ENCODE measurements at regions of chr2 and their contacts with region 1.

Region 1: DNA sequence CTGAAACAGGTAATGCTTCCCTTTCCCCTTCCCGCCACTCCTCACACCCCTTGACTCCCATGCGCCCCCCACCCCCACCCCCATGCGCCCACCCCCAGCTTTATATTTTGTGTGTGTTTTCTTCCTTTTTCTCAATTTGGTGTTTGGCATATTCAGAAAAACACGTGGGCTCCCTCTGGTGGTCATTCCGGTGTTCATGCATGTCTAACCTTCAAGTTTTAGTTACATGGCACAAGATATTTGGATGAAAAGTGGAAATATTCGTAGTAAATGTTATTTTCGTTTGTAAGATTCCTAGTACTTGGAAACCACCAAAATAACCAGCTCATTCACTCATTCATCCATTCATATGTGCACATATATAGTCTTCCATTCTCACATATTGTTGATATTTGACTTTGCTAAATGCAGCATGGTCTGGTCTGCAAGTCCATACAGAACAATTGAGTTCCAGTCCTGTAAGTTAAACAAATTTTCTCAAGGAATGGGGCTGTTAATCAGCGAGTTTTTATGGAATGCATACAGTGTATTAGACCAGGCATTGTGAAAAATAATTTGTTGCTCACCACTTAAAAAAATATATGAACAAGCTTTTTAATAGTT is 143.6 kb upstream of the MAP3K20 start:
- DNase-seq: no peak
- H3K4me3 ChIP-seq: no peak overlapping the region
- H3K27me3 ChIP-seq: no peaks in the 10 kb centered on the region
- CTCF ChIP-seq: peak; percentile 72

Region 2: DNA sequence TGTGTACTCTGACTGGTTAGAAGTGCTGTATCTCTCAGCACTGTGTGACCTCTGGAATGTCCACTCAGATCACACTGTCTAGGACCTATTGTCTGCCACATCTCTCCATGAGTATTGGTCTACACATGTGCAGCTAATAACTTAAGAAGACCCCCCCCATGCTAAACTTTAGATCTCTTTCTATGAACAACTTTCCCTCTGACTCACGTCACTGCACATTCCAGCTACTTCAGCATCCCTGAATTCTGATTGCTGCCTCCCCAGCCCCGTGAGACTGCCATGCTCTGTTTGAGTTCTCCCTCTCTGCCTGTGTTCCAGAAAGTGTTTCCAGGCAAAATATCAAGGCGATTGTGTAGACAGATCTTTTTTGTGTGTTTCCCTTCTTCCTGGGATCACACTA is 154.6 kb before region 1 on chr2:
- CTCF ChIA-PET with region 1: no interaction called
- POLR2A ChIA-PET with region 1: no interaction called
- DNase-seq: no peak
- H3K4me3 ChIP-seq: no peak overlapping the region
- H3K27me3 ChIP-seq: 0 out of 2 replicates have a peak, but pooled peaks cover 2% of the 10 kb centered on the region
- CTCF ChIP-seq: no peak

Region 3: DNA sequence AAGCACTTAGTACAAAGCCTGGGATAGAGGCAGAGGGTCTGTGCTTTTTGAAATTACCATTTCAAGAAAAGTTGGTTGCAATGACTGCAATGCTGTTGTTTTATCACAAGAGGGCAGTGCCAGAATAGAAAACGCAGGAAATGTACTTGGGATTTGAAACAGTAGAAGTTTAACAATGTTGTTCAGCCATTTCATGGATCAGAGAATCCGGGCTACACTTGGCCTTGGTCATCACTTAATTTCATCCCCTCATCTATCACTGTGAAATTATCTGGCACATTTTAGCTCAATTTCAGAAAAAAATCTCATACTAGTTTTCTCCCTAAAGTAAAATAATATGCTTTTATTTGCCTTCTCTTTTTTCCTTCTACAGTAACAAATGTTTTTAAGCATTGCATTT is 125.5 kb before region 1 on chr2:
- CTCF ChIA-PET with region 1: interaction called, 88 read pairs
- POLR2A ChIA-PET with region 1: no interaction called
- DNase-seq: no peak
- H3K4me3 ChIP-seq: no peak overlapping the region
- H3K27me3 ChIP-seq: peaks cover 2% of the 10 kb centered on the region
- CTCF ChIP-seq: peak; percentile 85

Region 4: DNA sequence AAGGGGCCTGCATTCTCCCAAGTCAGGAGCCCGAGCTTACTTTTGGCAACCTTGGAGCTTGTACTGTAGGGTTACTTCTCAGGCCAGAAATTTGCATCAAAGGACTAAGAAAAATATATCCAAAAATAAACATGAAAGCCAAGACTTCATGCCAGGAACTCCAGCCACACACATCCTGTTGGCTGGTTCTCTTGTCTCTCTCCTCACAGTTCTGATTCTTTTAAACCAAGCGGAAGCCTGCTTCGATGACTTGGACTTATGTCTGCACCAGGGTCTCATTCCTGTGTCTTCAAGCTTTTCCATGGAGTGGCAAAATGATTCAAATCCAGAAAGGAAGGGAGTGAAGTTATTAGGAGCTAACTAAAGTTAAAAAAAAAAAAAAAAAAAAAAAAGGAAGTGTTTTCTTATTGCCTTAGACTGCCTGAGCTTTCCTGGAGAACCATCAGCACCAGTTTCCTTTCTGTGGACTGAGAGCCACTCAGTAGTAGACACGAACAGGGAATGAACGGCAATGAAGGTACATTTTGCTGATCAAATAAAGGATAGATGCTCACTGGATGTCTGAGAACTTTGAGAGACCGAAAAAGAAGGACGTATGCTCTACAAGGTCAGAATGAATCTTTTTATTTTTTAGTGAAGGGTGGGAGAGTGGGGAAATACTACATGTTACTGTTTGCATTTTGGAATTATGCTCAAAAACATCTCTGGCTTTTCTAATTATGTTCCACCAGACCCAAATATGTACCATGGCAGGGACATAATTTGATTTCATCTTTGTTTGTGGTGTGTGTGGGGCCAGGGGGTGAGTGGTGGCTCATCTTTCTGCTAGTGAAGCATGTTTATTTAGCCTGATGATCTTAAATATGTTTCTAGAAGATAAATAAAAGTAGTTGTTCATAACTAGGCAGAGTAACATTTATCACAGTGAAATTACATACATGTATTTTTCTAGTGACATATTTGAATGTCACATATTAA is 110.4 kb before region 1 on chr2:
- CTCF ChIA-PET with region 1: interaction called, 10 read pairs
- POLR2A ChIA-PET with region 1: no interaction called
- DNase-seq: no peak
- H3K4me3 ChIP-seq: no peak overlapping the region
- H3K27me3 ChIP-seq: no peaks in the 10 kb centered on the region
- CTCF ChIP-seq: no peak

Region 5: DNA sequence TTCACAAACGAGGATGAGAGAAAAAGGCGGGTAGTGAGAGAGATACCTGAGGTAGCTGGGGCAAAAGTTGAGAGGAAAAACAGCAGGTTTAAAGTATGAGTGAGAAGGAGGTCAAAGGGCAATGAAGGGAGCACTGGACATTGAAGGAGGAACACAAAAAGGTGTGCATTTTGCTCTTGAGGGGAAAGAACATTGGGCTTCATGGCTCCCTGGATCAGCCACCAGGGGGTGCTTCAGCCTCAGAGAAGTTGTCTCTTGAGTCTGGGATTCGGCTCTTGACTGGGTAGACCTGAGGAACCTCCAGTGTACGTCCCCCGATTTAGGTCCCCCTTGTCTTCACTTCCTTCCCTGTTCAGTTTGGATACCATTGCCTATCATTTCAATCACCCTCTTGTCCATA is 67.8 kb before region 1 on chr2:
- CTCF ChIA-PET with region 1: interaction called, 42 read pairs
- POLR2A ChIA-PET with region 1: no interaction called
- DNase-seq: no peak
- H3K4me3 ChIP-seq: no peak overlapping the region
- H3K27me3 ChIP-seq: no peaks in the 10 kb centered on the region
- CTCF ChIP-seq: peak; percentile 64

Region 6: GRCh38 chr2:172943539-172943938 is 11.5 kb after region 1 on chr2:
- CTCF ChIA-PET with region 1: interaction called, 12 read pairs
- POLR2A ChIA-PET with region 1: no interaction called
- DNase-seq: no peak
- H3K4me3 ChIP-seq: no peak overlapping the region
- H3K27me3 ChIP-seq: no peaks in the 10 kb centered on the region
- CTCF ChIP-seq: no peak

Region 7: GRCh38 chr2:173027181-173028128 is 95.4 kb after region 1 on chr2:
- CTCF ChIA-PET with region 1: interaction called, 18 read pairs
- POLR2A ChIA-PET with region 1: no interaction called
- DNase-seq: no peak
- H3K4me3 ChIP-seq: no peak overlapping the region
- H3K27me3 ChIP-seq: no peaks in the 10 kb centered on the region
- CTCF ChIP-seq: peak; percentile 83

Region 8: GRCh38 chr2:173075781-173076580 is 144.0 kb after region 1 on chr2 and contains the start of gene MAP3K20:
- CTCF ChIA-PET with region 1: no interaction called
- POLR2A ChIA-PET with region 1: no interaction called
- DNase-seq: no peak
- H3K4me3 ChIP-seq: peak within 1 kb of the TSS; percentile 77
- H3K27me3 ChIP-seq: no peaks in the 10 kb centered on the region
- CTCF ChIP-seq: peak; percentile 47
- polyA plus RNA-seq, gene MAP3K20: 45.4 and 76.7 TPM in 2 replicates

Measured in BJ (cell line).